T-cell (primary cell): ENCODE measurements at regions of chr16 and their contacts with region 1.

Region 1: GRCh38 chr16:9644258-9644657 is 538.0 kb downstream of the GRIN2A start:
- DNase-seq: no peak
- ATAC-seq: no peak
- H3K4me3 ChIP-seq: no peak overlapping the region
- H3K4me3 Mint-ChIP-seq: no peak overlapping the region
- H3K27ac ChIP-seq: no peak overlapping the region
- H3K27ac Mint-ChIP-seq: no peak overlapping the region
- H3K4me1 ChIP-seq: no peaks in the 10 kb centered on the region
- H3K4me1 Mint-ChIP-seq: no peaks in the 10 kb centered on the region
- H3K27me3 ChIP-seq: no peaks in the 10 kb centered on the region
- H3K27me3 Mint-ChIP-seq: peaks cover 0 to 4% of the 10 kb centered on the region in 2 donors

Region 2: GRCh38 chr16:9630985-9631384 is 13.3 kb before region 1 on chr16:
- CTCF ChIA-PET with region 1: no interaction called
- POLR2A ChIA-PET with region 1: interaction called in 1 of 2 experiments, 18 read pairs
- DNase-seq: no peak
- ATAC-seq: no peak
- H3K4me3 ChIP-seq: no peak overlapping the region
- H3K4me3 Mint-ChIP-seq: no peak overlapping the region
- H3K27ac ChIP-seq: no peak overlapping the region
- H3K27ac Mint-ChIP-seq: no peak overlapping the region
- H3K4me1 ChIP-seq: no peaks in the 10 kb centered on the region
- H3K4me1 Mint-ChIP-seq: no peaks in the 10 kb centered on the region
- H3K27me3 ChIP-seq: no peaks in the 10 kb centered on the region
- H3K27me3 Mint-ChIP-seq: no peaks in the 10 kb centered on the region